Mucosa of descending colon (tissue), 3 donors: ENCODE measurements at regions of chr2 and their contacts with region 1.

Region 1: DNA sequence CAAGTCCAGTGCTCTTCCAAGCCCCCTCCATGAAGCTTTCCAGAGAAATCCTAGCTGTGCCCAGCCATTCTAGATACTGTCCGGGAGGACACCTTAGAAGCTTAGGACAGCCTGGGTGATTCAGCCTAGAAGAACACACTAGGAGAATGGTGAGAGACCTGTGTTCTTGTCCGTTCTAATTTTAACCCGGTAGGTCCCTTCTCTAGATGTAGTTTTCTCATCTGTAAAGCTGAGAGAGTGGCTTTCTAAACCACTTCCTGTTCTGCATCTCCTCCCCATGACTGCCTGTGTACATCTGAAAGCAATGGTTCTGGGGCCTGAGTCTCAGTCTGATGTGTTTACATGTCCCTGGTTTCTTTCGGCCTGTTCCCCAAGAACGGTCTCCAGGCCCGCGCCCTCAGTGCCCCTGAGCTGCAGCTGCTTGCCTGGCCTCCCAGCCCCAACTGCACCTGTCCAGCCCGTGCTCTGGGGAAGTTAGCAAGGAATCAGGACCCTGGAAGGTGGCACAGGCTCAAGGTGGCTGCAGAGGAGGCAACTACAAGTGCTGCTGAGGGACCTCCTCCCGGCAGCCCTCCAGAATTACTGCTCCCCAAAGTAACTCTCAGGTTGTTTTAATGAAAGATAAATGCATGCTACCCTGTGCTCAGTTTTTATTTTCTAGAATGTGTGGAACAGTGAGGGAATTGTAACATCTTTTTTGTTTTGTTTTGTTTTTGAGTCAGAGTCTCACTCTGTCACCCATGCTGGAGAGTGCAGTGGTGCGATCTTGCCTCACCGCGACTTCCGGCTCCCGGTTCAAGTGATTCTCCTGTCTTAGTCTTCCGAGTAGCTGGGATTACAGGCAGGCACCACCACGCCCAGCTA is 105.9 kb downstream of the LBH start:
- DNase-seq: peak; percentile 32 to 64 (median 43)
- ATAC-seq: peak; percentile 83
- H3K4me3 ChIP-seq: no peak overlapping the region
- H3K4me1 ChIP-seq: no peaks in the 10 kb centered on the region
- CTCF ChIP-seq: no peak

Region 2: DNA sequence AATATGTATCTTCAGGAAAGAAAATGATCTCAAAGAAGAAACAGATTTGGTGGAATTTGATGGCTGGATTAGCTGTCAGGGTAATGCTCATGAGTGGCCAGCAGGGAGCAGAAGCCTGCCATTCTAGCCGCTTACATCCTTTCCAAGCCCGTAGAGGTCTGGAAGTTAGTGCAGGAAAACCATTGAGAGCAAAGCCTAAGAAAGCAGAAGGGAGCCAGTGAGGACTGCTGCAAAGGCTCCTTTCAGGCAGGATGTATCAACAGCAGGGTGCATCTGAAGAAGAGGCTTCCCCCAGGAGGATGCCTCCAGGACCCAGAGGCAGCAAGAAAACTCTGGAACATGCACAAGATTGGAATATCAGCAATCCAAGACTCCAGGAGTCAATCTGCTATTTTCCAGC is 128.8 kb before region 1 on chr2:
- intact Hi-C with region 1: loop called in 1 of 2 experiments (anchors 10 kb)
- DNase-seq: peak in 2 of 3 donors; percentile 67 to 72
- ATAC-seq: peak; percentile 92
- H3K4me3 ChIP-seq: no peak overlapping the region
- H3K4me1 ChIP-seq: no peaks in the 10 kb centered on the region
- CTCF ChIP-seq: peak; percentile 50

Region 3: GRCh38 chr2:30231212-30231995 is 105.8 kb before region 1 on chr2 and contains the start of gene LBH:
- intact Hi-C with region 1: no loop called
- DNase-seq: peak; percentile 81 to 87 (median 87)
- ATAC-seq: peak; percentile 74
- H3K4me3 ChIP-seq: peak within 1 kb of the TSS; percentile 18
- H3K4me1 ChIP-seq: peaks cover 7% of the 10 kb centered on the region
- CTCF ChIP-seq: no peak
- total RNA-seq, gene LBH: 7.2 to 12.8 (median 12.4) TPM

Region 4: GRCh38 chr2:30404319-30404953 is 67.2 kb after region 1 on chr2:
- intact Hi-C with region 1: no loop called
- DNase-seq: peak in 1 of 3 donors; percentile 35
- ATAC-seq: no peak
- H3K4me3 ChIP-seq: no peak overlapping the region
- H3K4me1 ChIP-seq: peaks cover 25% of the 10 kb centered on the region
- CTCF ChIP-seq: no peak

Region 5: GRCh38 chr2:30789670-30790210 is 452.5 kb after region 1 on chr2:
- intact Hi-C with region 1: no loop called
- DNase-seq: no peak
- ATAC-seq: no peak
- H3K4me3 ChIP-seq: no peak overlapping the region
- H3K4me1 ChIP-seq: no peaks in the 10 kb centered on the region
- CTCF ChIP-seq: no peak